ENCODE measurements at regions of chr1 and their contacts with region 1.

Region 1: GRCh38 chr1:176206961-176207902 is at the start of gene COP1:
- DNase-seq: peak; percentile 82 to 97
- H3K4me3 ChIP-seq: peak within 1 kb of the TSS; percentile 79 to 98
- H3K27ac ChIP-seq: peak within 1 kb of the TSS; percentile 94 to 98
- H3K4me1 ChIP-seq: peaks cover 3 to 20% of the 10 kb centered on the region in 2 donors
- H3K27me3 ChIP-seq: no peaks in the 10 kb centered on the region
- CTCF ChIP-seq: no peak
- total RNA-seq, gene COP1: 76.3 TPM

Region 2: DNA sequence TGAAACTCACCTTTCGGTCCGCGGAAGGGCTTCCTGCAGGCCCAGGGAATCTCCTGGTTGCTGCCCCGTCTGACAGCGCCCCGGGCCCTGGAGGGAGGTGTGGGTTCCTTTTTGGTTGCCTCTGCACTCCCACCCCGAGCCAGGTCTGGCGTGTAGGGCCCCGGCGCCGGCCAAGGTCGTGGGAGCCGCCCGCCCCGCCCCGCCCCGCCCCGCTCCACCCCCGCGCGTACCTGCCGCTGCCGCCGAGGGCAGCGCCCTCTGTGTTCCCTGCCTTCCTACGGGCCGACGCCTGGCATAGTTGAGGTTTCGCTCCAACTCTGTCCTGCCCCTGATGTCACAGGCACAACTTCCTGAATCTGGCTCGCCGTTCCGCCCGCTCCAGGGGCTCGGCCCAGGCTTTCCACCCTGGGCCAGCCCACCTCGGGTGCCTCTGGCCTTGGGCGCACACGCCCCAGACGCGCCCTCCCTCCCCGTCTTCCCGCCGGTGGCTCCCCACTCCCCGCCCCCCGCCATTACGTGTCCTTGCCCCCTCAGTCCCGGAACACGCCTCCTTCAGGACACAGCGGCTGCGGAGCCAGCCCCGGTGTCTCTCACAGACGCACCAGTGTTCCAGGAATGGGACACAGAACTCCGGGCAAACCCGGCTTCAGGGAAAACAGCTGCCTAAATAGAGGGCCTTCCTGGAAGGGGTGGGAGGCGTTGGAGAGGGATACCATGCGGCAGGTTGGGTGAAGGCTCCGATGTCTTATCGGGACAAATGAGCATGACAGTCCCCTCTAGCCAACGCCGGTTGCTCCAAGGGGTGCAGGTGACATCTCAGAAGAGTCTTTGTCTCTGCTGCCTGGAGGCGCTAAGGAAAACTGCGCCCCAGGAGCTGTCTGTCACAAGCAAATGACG is 1014.4 kb before region 1 on chr1 and contains the start of gene KIAA0040:
- intact Hi-C with region 1: loop called (anchors 2 kb)
- DNase-seq: peak; percentile 37 to 91
- H3K4me3 ChIP-seq: peak within 1 kb of the TSS; percentile 58 to 77
- H3K27ac ChIP-seq: peak within 1 kb of the TSS; percentile 76 to 80
- H3K4me1 ChIP-seq: peaks cover 3 to 13% of the 10 kb centered on the region in 2 donors
- H3K27me3 ChIP-seq: no peaks in the 10 kb centered on the region
- CTCF ChIP-seq: peak in 2 of 3 experiments; percentile 17 to 30
- total RNA-seq, gene KIAA0040: 36.7 TPM

Region 3: GRCh38 chr1:175877939-175878737 is 329.1 kb before region 1 on chr1:
- intact Hi-C with region 1: loop called (anchors 2 kb)
- DNase-seq: peak; percentile 88 to 96
- H3K4me3 ChIP-seq: peak overlapping the region in 1 of 2 donors; percentile 40
- H3K27ac ChIP-seq: peak overlapping the region; percentile 94 to 96
- H3K4me1 ChIP-seq: peaks cover 10 to 41% of the 10 kb centered on the region in 2 donors
- H3K27me3 ChIP-seq: no peaks in the 10 kb centered on the region
- CTCF ChIP-seq: no peak

Region 4: DNA sequence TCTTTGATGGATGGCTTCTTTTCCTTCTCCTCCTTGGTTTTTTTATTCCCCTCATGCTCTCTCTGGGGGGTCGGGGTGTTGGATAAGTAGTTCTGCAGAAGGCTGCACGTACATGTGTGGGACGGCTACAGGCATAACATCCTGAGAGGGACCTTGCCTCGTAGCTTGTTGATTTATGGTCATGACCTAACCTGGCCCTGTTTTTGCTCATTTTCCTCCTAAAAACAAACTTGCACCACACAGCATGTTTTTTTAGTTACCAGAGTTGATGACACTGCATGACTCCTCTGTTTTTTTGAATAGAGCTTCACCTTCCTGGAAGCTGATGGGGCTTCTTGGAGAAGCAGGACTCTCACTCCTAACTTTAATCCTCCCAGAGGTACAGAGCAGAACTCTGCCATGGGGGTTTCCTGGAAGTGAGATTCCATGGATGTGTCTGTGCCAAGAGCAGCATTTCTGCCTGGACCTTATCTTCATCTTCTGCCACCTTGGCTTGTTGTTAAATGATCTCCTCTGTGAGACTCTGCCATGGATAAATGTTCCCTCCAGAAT is 370.5 kb after region 1 on chr1:
- intact Hi-C with region 1: no loop called
- DNase-seq: no peak
- H3K4me3 ChIP-seq: no peak overlapping the region
- H3K27ac ChIP-seq: no peak overlapping the region
- H3K4me1 ChIP-seq: peaks cover 0 to 16% of the 10 kb centered on the region in 2 donors
- H3K27me3 ChIP-seq: no peaks in the 10 kb centered on the region
- CTCF ChIP-seq: no peak